ENCODE measurements at regions of chr7 and their contacts with region 1.

Region 1: DNA sequence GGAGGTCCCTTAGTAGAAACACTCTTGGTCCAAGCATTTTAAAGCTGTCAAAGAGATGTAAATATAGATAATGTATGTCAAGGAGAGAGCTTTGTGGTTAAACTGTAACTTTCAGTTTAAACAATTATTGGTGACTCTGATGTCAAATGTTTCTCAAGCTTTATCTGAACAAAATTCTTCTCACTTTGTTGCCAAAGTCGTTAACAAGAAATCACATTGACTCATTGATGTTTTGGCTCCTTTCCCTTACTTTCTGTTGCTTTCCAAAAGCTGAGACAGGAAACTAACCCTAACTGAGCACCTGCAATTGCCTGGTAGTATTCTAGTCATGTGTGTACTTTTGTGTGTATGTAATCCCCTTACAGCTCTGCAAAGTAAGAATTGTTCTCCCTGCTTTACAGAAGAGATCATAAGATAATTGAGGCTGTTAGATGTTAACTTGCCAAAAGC is 108.5 kb downstream of the CFTR start:
- DNase-seq: peak; percentile 75 to 84
- H3K4me3 ChIP-seq: no peak overlapping the region
- H3K4me3 Mint-ChIP-seq: peak overlapping the region; percentile 57
- H3K27ac Mint-ChIP-seq: peak overlapping the region; percentile 37
- H3K4me1 ChIP-seq: peaks cover 69% of the 10 kb centered on the region
- H3K4me1 Mint-ChIP-seq: peaks cover 51% of the 10 kb centered on the region
- H3K27me3 ChIP-seq: no peaks in the 10 kb centered on the region
- H3K27me3 Mint-ChIP-seq: no peaks in the 10 kb centered on the region
- CTCF ChIP-seq: no peak

Region 2: DNA sequence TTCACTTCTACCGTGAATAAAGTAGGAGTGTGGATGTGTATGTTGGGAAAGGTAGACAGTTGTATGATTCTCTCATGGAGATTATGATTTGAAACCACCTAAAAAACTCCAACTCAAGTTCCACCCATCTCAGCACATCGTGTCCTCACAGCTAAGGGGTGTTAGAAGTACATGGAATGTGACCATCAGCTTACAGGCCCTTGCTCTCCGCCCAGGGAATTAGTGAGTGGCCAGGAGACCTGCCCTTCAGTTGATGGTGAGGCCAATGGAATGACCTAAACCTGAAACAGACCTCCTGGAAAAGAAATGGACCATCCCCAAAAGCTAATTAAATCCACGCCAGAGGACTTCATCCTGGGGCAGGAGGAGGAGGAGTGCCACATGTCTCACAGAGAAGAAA is 263.4 kb before region 1 on chr7:
- CTCF ChIA-PET with region 1: no interaction called
- POLR2A ChIA-PET with region 1: no interaction called
- intact Hi-C with region 1: no loop called
- DNase-seq: no peak
- H3K4me3 ChIP-seq: no peak overlapping the region
- H3K4me3 Mint-ChIP-seq: peak overlapping the region; percentile 70
- H3K27ac Mint-ChIP-seq: no peak overlapping the region
- H3K4me1 ChIP-seq: no peaks in the 10 kb centered on the region
- H3K4me1 Mint-ChIP-seq: no peaks in the 10 kb centered on the region
- H3K27me3 ChIP-seq: peaks cover 7% of the 10 kb centered on the region
- H3K27me3 Mint-ChIP-seq: peaks cover 31% of the 10 kb centered on the region
- CTCF ChIP-seq: no peak

Region 3: GRCh38 chr7:117445206-117445605 is 143.2 kb before region 1 on chr7:
- CTCF ChIA-PET with region 1: no interaction called
- POLR2A ChIA-PET with region 1: no interaction called
- intact Hi-C with region 1: no loop called
- DNase-seq: peak in 1 of 2 experiments; percentile 9
- H3K4me3 ChIP-seq: no peak overlapping the region
- H3K4me3 Mint-ChIP-seq: no peak overlapping the region
- H3K27ac Mint-ChIP-seq: no peak overlapping the region
- H3K4me1 ChIP-seq: 0 out of 2 replicates have a peak, but pooled peaks cover 10% of the 10 kb centered on the region
- H3K4me1 Mint-ChIP-seq: peaks cover 8% of the 10 kb centered on the region
- H3K27me3 ChIP-seq: no peaks in the 10 kb centered on the region
- H3K27me3 Mint-ChIP-seq: no peaks in the 10 kb centered on the region
- CTCF ChIP-seq: no peak

Region 4: GRCh38 chr7:117458977-117459583 is 129.3 kb before region 1 on chr7:
- CTCF ChIA-PET with region 1: interaction called, 3 read pairs
- POLR2A ChIA-PET with region 1: no interaction called
- intact Hi-C with region 1: loop called (anchors 1 kb)
- DNase-seq: peak in 1 of 2 experiments; percentile 30
- H3K4me3 ChIP-seq: no peak overlapping the region
- H3K4me3 Mint-ChIP-seq: no peak overlapping the region
- H3K27ac Mint-ChIP-seq: no peak overlapping the region
- H3K4me1 ChIP-seq: 0 out of 2 replicates have a peak, but pooled peaks cover 2% of the 10 kb centered on the region
- H3K4me1 Mint-ChIP-seq: no peaks in the 10 kb centered on the region
- H3K27me3 ChIP-seq: no peaks in the 10 kb centered on the region
- H3K27me3 Mint-ChIP-seq: no peaks in the 10 kb centered on the region
- CTCF ChIP-seq: peak; percentile 65 to 71

Region 5: DNA sequence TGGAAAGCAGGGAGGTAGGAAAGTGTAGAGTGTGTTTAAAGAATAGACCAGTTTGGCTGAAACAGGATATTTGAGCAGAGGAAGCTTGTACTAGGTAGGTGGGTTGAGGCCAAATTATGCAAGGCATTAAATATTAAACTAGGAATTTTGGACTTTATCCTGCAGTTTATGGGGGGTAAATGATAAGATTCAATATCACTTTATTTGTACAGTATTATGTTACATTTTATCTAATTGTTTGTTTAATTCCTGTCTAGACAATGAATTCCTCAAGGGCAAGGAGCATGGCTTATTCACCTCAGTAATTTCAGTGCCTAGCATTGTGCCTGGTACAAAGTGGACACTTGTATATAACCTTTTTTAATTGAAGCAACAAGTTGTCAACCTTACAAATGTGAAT is 17.3 kb after region 1 on chr7:
- CTCF ChIA-PET with region 1: no interaction called
- POLR2A ChIA-PET with region 1: no interaction called
- intact Hi-C with region 1: loop called (anchors 1 kb)
- DNase-seq: no peak
- H3K4me3 ChIP-seq: no peak overlapping the region
- H3K4me3 Mint-ChIP-seq: no peak overlapping the region
- H3K27ac Mint-ChIP-seq: peak overlapping the region; percentile 14
- H3K4me1 ChIP-seq: peaks cover 38% of the 10 kb centered on the region
- H3K4me1 Mint-ChIP-seq: peaks cover 21% of the 10 kb centered on the region
- H3K27me3 ChIP-seq: no peaks in the 10 kb centered on the region
- H3K27me3 Mint-ChIP-seq: no peaks in the 10 kb centered on the region
- CTCF ChIP-seq: no peak

Region 6: DNA sequence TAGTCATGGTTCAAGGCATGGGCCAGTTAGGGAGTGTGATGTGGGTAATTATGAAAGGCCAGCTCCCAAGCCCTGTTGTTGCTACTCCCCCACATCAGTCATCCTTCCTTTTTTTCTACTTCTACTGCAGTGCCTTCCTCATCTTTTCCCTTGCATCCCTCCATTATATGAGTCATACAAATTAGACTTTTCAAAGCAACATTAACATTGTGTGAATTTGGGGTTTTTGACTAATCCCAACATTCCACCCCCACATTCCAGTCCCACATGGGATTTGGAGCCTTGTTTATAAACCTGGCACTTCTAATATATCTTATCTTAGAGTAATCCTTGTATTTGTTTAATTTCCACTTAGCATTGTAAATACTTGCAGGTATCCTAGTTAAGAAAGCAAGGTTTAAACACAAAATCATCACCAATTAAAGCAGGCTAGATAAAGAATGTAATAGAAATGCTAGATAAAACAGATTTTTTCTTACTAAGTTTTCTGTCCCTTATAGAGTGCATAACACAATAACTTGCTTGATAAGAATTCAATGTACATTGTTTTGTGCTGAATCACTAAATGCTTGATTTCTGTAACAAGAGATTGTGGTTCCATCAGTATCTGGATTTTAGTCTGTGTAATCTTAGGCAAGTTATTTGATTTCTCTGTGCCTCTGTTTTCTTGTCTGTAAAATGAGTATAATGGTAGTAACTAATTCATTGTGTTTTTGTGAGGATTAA is 57.2 kb after region 1 on chr7:
- CTCF ChIA-PET with region 1: no interaction called
- POLR2A ChIA-PET with region 1: no interaction called
- intact Hi-C with region 1: loop called (anchors 1 kb)
- DNase-seq: peak; percentile 59 to 60
- H3K4me3 ChIP-seq: no peak overlapping the region
- H3K4me3 Mint-ChIP-seq: no peak overlapping the region
- H3K27ac Mint-ChIP-seq: peak overlapping the region; percentile 72
- H3K4me1 ChIP-seq: peaks cover 36% of the 10 kb centered on the region
- H3K4me1 Mint-ChIP-seq: peaks cover 38% of the 10 kb centered on the region
- H3K27me3 ChIP-seq: no peaks in the 10 kb centered on the region
- H3K27me3 Mint-ChIP-seq: no peaks in the 10 kb centered on the region
- CTCF ChIP-seq: no peak

Region 7: DNA sequence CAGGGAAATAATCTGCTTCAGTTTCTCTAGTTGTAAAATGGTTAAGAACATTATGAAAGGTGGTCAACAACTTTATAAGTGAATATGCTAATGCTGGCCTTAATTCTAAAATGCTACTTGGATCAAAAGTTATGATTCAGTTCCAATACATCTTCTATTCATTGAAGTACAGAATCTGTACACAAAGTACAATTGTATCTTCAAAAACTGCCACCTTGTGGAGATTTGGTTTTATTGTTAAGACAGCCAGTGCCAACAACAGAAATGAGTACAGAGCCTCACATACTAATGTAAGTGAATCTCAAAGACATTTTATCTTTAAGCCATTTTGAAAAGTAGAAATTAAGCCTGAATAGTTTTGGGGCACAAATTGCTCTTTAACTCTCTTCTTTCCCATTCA is 85.5 kb after region 1 on chr7:
- CTCF ChIA-PET with region 1: interaction called, 3 read pairs
- POLR2A ChIA-PET with region 1: no interaction called
- intact Hi-C with region 1: loop called (anchors 1 kb)
- DNase-seq: peak in 1 of 2 experiments; percentile 39
- H3K4me3 ChIP-seq: no peak overlapping the region
- H3K4me3 Mint-ChIP-seq: peak overlapping the region; percentile 65
- H3K27ac Mint-ChIP-seq: peak overlapping the region; percentile 87
- H3K4me1 ChIP-seq: peaks cover 60% of the 10 kb centered on the region
- H3K4me1 Mint-ChIP-seq: peaks cover 59% of the 10 kb centered on the region
- H3K27me3 ChIP-seq: no peaks in the 10 kb centered on the region
- H3K27me3 Mint-ChIP-seq: no peaks in the 10 kb centered on the region
- CTCF ChIP-seq: peak; percentile 22 to 46

Region 8: GRCh38 chr7:117689406-117689805 is 101.0 kb after region 1 on chr7:
- CTCF ChIA-PET with region 1: no interaction called
- POLR2A ChIA-PET with region 1: no interaction called
- intact Hi-C with region 1: loop called (anchors 1 kb)
- DNase-seq: peak; percentile 35 to 53
- H3K4me3 ChIP-seq: no peak overlapping the region
- H3K4me3 Mint-ChIP-seq: peak overlapping the region; percentile 76
- H3K27ac Mint-ChIP-seq: peak overlapping the region; percentile 91
- H3K4me1 ChIP-seq: peaks cover 65% of the 10 kb centered on the region
- H3K4me1 Mint-ChIP-seq: peaks cover 37% of the 10 kb centered on the region
- H3K27me3 ChIP-seq: no peaks in the 10 kb centered on the region
- H3K27me3 Mint-ChIP-seq: no peaks in the 10 kb centered on the region
- CTCF ChIP-seq: no peak

Region 9: GRCh38 chr7:117941138-117941810 is 352.9 kb after region 1 on chr7:
- CTCF ChIA-PET with region 1: no interaction called
- POLR2A ChIA-PET with region 1: no interaction called
- intact Hi-C with region 1: loop called (anchors 1 kb)
- DNase-seq: peak in 1 of 2 experiments; percentile 53
- H3K4me3 ChIP-seq: no peak overlapping the region
- H3K4me3 Mint-ChIP-seq: peak overlapping the region; percentile 8
- H3K27ac Mint-ChIP-seq: peak overlapping the region; percentile 76
- H3K4me1 ChIP-seq: peaks cover 4% of the 10 kb centered on the region; the same call in 1 of the 2 replicates
- H3K4me1 Mint-ChIP-seq: peaks cover 23% of the 10 kb centered on the region
- H3K27me3 ChIP-seq: no peaks in the 10 kb centered on the region; the same call in 1 of the 2 replicates
- H3K27me3 Mint-ChIP-seq: no peaks in the 10 kb centered on the region
- CTCF ChIP-seq: no peak

Measured in Caco-2 (cell line).